ENCODE measurements at regions of chr6 and their contacts with region 1.

Region 1: DNA sequence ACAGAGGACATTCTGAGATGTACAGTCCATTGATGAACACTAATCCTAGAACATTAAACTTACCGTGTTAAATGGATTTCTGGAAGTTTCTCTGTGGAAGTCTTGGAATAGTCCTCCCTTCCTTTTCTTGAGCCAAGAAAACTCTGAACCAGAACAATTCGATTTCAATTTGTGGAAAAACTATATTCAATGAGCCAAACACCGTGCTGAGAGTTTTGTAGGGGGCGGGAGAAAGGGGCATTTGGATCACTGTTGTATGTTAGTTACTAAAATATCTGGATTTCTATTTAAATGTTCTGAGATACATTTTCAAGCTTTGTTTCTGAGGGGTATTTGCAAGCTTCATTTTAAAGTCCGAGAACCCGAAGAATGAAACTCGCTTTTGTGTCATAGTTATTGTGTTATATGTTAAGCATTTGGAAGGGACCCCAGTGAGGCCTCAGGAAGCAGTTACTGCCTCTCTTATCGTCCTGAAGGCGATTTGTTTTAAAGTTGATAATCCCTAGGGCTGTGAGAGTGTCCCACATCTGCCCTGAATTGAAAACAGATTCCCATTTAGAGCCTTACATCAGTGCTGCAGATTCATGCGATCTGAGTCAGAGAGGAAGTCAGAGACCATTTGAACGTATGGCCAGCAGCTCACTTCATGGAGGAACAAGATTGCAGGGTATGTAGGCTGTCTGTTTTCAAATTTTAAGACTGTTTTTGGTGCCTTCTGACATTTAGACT is 70.8 kb upstream of the SASH1 start:
- DNase-seq: peak; percentile 99
- ATAC-seq: peak; percentile 73
- H3K4me3 ChIP-seq: peak overlapping the region; percentile 4; the same call in 1 of the 2 replicates
- H3K27ac ChIP-seq: peak overlapping the region; percentile 52
- H3K4me1 ChIP-seq: peaks cover 17% of the 10 kb centered on the region
- H3K27me3 ChIP-seq: no peaks in the 10 kb centered on the region
- CTCF ChIP-seq: no peak
- POLR2A ChIP-seq: peak; percentile 81
- RAD21 ChIP-seq: 0 out of 2 replicates have a peak, but pooled peaks have one; percentile 17

Region 2: GRCh38 chr6:147873816-147874215 is 398.1 kb before region 1 on chr6:
- CTCF ChIA-PET with region 1: no interaction called
- POLR2A ChIA-PET with region 1: no interaction called
- dilution Hi-C with region 1: no loop called
- in situ Hi-C with region 1: no loop called
- intact Hi-C with region 1: no loop called
- DNase-seq: peak; percentile 41
- ATAC-seq: peak; percentile 68
- H3K4me3 ChIP-seq: no peak overlapping the region
- H3K27ac ChIP-seq: no peak overlapping the region
- H3K4me1 ChIP-seq: peaks cover 2% of the 10 kb centered on the region; the same call in 1 of the 2 replicates
- H3K27me3 ChIP-seq: no peaks in the 10 kb centered on the region
- CTCF ChIP-seq: no peak
- POLR2A ChIP-seq: no peak
- RAD21 ChIP-seq: no peak

Region 3: GRCh38 chr6:148332088-148332487 is 60.2 kb after region 1 on chr6:
- CTCF ChIA-PET with region 1: no interaction called
- POLR2A ChIA-PET with region 1: interaction called, 15 read pairs
- dilution Hi-C with region 1: no loop called
- in situ Hi-C with region 1: no loop called
- intact Hi-C with region 1: no loop called
- DNase-seq: no peak
- ATAC-seq: no peak
- H3K4me3 ChIP-seq: no peak overlapping the region
- H3K27ac ChIP-seq: no peak overlapping the region
- H3K4me1 ChIP-seq: peaks cover 11% of the 10 kb centered on the region
- H3K27me3 ChIP-seq: no peaks in the 10 kb centered on the region
- CTCF ChIP-seq: no peak
- POLR2A ChIP-seq: no peak
- RAD21 ChIP-seq: no peak

Region 4: DNA sequence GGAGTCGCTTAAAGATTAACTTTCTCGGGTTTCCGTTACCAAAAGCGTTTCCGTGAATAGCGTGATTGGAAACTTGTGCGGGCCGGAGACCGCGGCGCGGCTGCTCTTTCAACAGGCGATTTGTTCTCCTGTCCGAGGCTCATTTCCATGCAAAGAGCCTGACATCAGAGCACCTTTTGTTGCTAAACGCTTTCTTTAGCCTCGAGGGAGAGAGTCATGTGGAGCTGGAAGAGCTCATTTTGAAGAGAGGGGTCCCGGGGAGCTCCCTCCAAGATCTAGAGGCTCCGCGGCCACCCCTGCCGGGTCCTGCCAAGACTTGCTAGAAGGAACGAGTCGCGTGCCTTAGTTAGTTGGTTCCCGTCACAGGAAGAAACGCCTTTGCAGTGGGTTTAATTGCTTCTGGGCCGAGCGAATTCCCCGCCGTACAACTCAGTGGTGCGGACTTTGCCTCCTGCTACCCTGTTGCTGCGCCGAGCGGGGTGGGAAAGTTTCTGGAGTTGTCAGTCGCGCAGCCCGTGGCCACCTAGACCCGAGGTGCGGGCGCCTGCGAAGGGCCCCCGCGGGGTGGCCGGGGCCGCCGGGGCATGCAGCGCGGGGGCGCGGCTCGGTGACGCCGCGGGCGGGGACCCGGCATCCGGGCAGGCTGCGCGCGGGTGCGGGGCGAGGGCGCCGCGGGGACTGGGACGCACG is 70.6 kb after region 1 on chr6 and contains the start of gene SASH1:
- CTCF ChIA-PET with region 1: no interaction called
- POLR2A ChIA-PET with region 1: interaction called, 4 read pairs
- dilution Hi-C with region 1: no loop called
- in situ Hi-C with region 1: no loop called
- intact Hi-C with region 1: loop called (anchors 5 kb)
- DNase-seq: peak; percentile 77
- ATAC-seq: peak; percentile 87
- H3K4me3 ChIP-seq: peak within 1 kb of the TSS; percentile 62
- H3K27ac ChIP-seq: peak within 1 kb of the TSS; percentile 95
- H3K4me1 ChIP-seq: peaks cover 4% of the 10 kb centered on the region; the same call in 1 of the 2 replicates
- H3K27me3 ChIP-seq: no peaks in the 10 kb centered on the region
- CTCF ChIP-seq: no peak
- POLR2A ChIP-seq: no peak
- RAD21 ChIP-seq: no peak
- total RNA-seq, gene SASH1: 16.5 and 20.3 TPM in 2 replicates

Region 5: GRCh38 chr6:148520109-148520841 is 248.4 kb after region 1 on chr6:
- CTCF ChIA-PET with region 1: no interaction called
- POLR2A ChIA-PET with region 1: no interaction called
- dilution Hi-C with region 1: no loop called
- in situ Hi-C with region 1: no loop called
- intact Hi-C with region 1: loop called (anchors 5 kb)
- DNase-seq: no peak
- ATAC-seq: no peak
- H3K4me3 ChIP-seq: no peak overlapping the region
- H3K27ac ChIP-seq: peak overlapping the region; percentile 67
- H3K4me1 ChIP-seq: peaks cover 18% of the 10 kb centered on the region
- H3K27me3 ChIP-seq: no peaks in the 10 kb centered on the region
- CTCF ChIP-seq: no peak
- POLR2A ChIP-seq: no peak
- RAD21 ChIP-seq: no peak